Activated T-helper 2 cell treated with anti-CD3 and anti-CD28 coated beads, Interferon-gamma antibody, Interleukin-2, Interleukin-4, amounts not matched to agents 10 μg/mL and 5 μg/mL and 100 μg/mL, durations not matched to agents 14 hours and 24 hours and 36 hours (primary cell): ENCODE measurements at regions of chr1 and their contacts with region 1.

Region 1: DNA sequence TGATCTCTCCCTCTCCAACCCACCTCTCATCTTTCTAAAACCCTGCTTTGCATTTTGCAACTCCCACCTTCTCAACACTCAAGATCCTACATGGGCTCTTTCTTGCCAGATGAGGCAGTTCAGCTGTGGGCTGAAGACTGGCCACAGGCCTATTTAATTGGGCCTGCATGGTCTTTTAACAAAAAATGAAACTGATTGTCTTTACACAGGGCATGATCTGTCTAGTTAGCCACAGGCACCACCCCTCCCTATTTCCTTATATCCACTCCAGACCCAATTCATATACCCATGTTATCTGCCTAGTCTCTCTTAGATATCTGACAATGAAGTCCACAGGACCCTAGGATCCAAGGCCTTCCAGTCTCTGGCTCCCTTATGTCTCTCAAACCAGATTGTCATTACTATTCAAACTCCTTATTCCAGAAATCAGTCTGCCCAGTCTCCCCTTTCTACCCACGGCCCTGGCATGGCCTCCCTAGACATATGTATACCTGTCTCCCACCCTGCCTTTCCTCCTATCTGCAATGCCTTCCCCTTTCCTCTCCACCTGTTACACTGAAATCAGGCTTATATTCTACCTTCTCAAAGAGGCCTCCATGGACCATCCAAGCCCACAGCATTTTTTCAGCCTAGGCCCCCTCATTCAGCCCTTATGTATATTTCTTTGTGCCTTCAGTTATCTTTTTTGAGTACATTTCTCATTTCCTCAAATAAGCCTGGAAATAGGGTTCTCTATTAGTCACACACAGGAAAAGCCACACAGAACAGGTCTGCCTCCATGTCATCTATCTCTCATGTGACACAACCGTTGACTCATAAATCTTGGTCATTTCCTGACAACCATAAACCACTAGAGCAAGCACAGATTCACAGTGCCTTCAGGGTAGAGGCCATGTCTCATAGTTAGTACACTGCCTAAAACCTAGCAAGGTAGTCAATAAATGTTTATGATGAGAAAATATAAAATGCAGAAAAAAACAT is 39.0 kb downstream of the LPAR3 start:
- DNase-seq: peak; percentile 45
- H3K4me3 Mint-ChIP-seq: no peak overlapping the region
- H3K27ac Mint-ChIP-seq: peak overlapping the region; percentile 33
- H3K4me1 Mint-ChIP-seq: peaks cover 31% of the 10 kb centered on the region
- H3K27me3 Mint-ChIP-seq: peaks cover 17% of the 10 kb centered on the region

Region 2: GRCh38 chr1:84936116-84936810 is 82.2 kb after region 1 on chr1:
- intact Hi-C with region 1: loop called (anchors 10 kb)
- DNase-seq: no peak
- H3K4me3 Mint-ChIP-seq: no peak overlapping the region
- H3K27ac Mint-ChIP-seq: no peak overlapping the region
- H3K4me1 Mint-ChIP-seq: peaks cover 4% of the 10 kb centered on the region
- H3K27me3 Mint-ChIP-seq: no peaks in the 10 kb centered on the region

Region 3: DNA sequence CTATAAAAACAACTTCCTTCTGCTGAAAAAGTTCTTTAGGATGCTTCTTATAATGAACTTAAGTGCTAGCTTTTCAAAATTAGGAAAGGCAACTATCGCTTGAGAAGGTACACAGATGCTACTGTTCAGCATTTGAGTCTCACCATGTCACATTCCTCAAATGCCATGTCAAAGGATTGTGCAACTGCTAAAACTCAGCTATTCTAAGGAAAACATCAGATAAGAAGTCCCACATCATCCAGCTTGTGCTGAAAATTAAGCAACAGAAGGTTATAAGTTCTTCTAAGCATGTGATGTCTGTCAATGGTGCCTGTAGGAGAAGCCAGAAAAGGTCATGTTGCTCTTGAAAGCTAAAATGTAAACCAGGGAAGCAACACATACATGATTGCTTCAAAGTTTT is 106.3 kb after region 1 on chr1:
- intact Hi-C with region 1: no loop called
- DNase-seq: no peak
- H3K4me3 Mint-ChIP-seq: no peak overlapping the region
- H3K27ac Mint-ChIP-seq: peak overlapping the region; percentile 58
- H3K4me1 Mint-ChIP-seq: peaks cover 36% of the 10 kb centered on the region
- H3K27me3 Mint-ChIP-seq: no peaks in the 10 kb centered on the region

Region 4: DNA sequence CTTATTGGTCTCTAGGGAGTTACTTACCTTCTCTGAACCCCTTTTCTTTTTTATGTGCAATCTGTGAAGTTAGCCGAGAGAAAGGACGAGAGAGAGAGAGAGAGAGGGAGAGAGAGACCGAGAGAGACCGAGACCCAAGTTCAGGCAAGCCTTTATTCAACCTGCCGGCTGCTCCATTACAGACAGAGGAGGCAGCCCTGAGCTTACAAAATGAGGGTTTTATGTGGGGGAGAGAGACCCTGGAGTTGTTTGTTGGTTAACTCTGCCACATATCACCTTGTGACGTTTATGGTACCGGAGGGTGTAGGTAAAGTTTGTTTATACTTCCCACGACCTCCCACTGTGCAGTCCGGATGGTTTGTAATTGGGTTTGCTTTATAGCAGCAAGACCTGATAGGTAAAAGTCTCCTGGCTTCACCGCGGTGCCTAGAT is 195.7 kb after region 1 on chr1:
- intact Hi-C with region 1: loop called (anchors 5 kb)
- DNase-seq: no peak
- H3K4me3 Mint-ChIP-seq: peak overlapping the region; percentile 15
- H3K27ac Mint-ChIP-seq: no peak overlapping the region
- H3K4me1 Mint-ChIP-seq: peaks cover 24% of the 10 kb centered on the region
- H3K27me3 Mint-ChIP-seq: peaks cover 33% of the 10 kb centered on the region